OCI-LY7 (cell line): ENCODE measurements at regions of chr18 and their contacts with region 1.

Region 1: DNA sequence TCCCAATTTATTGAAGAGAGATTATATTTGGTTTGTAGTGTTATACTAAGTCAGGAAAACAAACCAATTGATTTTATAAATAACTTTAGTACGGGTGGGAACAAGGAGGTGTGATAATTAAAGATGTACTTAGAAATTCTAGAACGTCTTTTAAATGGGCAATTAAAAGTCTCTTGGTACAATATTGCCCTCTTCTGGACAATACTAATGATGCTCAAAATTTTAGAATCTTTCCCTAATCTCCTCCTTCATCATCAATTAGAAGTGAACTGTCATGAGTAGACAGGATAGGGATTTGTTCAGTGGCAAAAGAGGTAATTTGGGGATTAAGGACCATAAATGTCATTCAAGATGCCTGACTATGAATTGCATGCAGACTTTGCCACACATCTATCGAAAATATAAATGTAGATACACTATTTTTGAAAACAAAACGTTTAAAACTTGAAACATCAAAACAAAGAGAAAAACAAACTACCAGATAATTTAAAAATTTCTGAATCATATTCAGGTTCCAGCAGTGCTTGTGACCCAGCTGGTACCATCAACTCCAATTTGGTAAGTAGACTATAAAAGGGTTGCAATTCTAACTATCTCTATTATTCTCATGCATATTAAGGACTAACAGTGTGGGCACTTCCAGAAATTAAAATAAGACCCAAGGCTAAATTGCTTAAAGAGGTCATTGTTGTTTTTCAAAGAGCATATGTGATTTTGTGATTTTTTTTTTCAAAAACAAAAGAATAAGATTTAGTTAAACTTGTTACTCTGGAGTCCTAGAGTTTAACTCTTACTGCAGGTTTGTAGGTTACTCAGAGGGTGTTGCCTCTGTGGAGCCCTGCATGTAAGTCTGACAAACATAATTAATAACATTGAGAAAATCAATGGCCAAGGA is 123.5 kb downstream of the LAMA3 start:
- DNase-seq: peak; percentile 46
- H3K4me3 ChIP-seq: no peak overlapping the region
- H3K27ac ChIP-seq: no peak overlapping the region
- H3K4me1 ChIP-seq: peaks cover 14% of the 10 kb centered on the region
- CTCF ChIP-seq: peak; percentile 85

Region 2: GRCh38 chr18:23515911-23516546 is 296.8 kb before region 1 on chr18:
- CTCF ChIA-PET with region 1: no interaction called
- POLR2A ChIA-PET with region 1: no interaction called
- intact Hi-C with region 1: loop called (anchors 5 kb)
- DNase-seq: peak; percentile 81
- H3K4me3 ChIP-seq: no peak overlapping the region
- H3K27ac ChIP-seq: no peak overlapping the region
- H3K4me1 ChIP-seq: no peaks in the 10 kb centered on the region
- CTCF ChIP-seq: peak; percentile 97

Region 3: DNA sequence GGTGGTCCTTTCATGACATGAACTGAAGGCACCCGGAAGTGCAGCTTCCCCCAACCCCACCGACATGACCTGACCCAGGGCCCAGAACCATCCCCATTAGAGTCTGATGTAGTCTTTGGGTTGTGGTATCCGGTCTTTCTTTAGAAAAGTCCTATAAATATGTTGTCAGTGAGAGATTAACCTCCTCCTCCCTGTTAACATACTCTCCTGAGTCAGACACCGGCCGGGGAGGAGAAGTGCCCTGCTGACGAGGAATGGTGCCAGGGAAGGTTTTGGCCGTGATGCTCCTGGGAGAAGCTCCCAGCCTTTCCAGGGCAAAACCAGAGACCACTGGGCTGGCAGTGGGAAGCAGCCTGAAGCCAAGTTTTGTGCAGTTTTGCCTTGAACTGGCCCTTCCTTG is 14.5 kb before region 1 on chr18:
- CTCF ChIA-PET with region 1: no interaction called
- POLR2A ChIA-PET with region 1: no interaction called
- intact Hi-C with region 1: no loop called
- DNase-seq: no peak
- H3K4me3 ChIP-seq: no peak overlapping the region
- H3K27ac ChIP-seq: no peak overlapping the region
- H3K4me1 ChIP-seq: no peaks in the 10 kb centered on the region
- CTCF ChIP-seq: no peak